PC-3 (cell line): ENCODE measurements at regions of chr10 and their contacts with region 1.

Region 1: GRCh38 chr10:29857843-29858701 is 201.3 kb downstream of the JCAD start:
- DNase-seq: peak; percentile 81
- ATAC-seq: peak; percentile 57
- H3K4me3 ChIP-seq: peak overlapping the region; percentile 28; the same call in 1 of the 2 replicates
- H3K27ac ChIP-seq: peak overlapping the region; percentile 63
- H3K4me1 ChIP-seq: peaks cover 41% of the 10 kb centered on the region
- H3K27me3 ChIP-seq: no peaks in the 10 kb centered on the region
- CTCF ChIP-seq: peak; percentile 82

Region 2: GRCh38 chr10:29535012-29535777 is 322.9 kb before region 1 on chr10:
- CTCF ChIA-PET with region 1: no interaction called
- POLR2A ChIA-PET with region 1: no interaction called
- intact Hi-C with region 1: loop called (anchors 10 kb)
- DNase-seq: peak; percentile 90
- ATAC-seq: peak; percentile 89
- H3K4me3 ChIP-seq: peak overlapping the region; percentile 43; the same call in 1 of the 2 replicates
- H3K27ac ChIP-seq: peak overlapping the region; percentile 96
- H3K4me1 ChIP-seq: peaks cover 43% of the 10 kb centered on the region
- H3K27me3 ChIP-seq: no peaks in the 10 kb centered on the region
- CTCF ChIP-seq: peak; percentile 90

Region 3: GRCh38 chr10:29658984-29659965 is 198.8 kb before region 1 on chr10:
- CTCF ChIA-PET with region 1: no interaction called
- POLR2A ChIA-PET with region 1: no interaction called
- intact Hi-C with region 1: loop called (anchors 1 kb)
- DNase-seq: peak; percentile 95
- ATAC-seq: peak; percentile 94
- H3K4me3 ChIP-seq: peak overlapping the region; percentile 30
- H3K27ac ChIP-seq: peak overlapping the region; percentile 94
- H3K4me1 ChIP-seq: peaks cover 42% of the 10 kb centered on the region
- H3K27me3 ChIP-seq: no peaks in the 10 kb centered on the region
- CTCF ChIP-seq: no peak

Region 4: DNA sequence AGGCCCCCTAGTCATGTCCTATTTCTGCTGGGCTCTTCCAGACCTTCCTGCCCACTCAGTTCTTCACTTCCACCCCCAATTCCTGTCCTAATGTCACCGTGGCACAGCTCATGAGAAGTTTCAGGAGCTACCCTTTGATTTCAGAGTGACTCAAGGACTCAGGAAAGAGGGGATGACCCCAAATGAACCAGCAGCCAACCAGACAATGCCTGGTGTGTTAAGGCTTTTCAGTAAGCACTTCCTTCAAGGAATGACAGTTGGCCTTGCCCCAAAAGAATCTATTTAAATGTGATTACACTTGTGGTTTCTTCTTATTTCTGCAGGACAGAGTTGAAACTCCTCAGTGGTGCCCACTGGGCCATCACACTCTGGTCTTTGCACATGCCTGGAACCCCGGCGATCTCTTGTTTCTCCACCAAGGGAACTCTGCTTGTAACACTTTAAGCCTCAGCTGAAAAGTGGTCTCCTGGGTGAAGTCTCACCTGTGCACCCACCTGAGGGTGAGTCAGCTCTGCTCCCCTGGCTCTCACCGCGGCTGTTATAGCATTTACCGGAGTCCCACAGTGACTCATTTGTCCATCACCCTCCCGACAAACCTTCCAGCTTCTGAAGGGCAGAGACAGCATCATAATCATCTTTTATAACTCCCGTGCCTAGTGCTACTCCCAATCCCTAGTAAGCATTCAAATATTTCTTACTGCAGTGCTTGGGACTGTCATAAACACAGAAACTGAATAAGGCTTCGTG is 100.3 kb before region 1 on chr10:
- CTCF ChIA-PET with region 1: no interaction called
- POLR2A ChIA-PET with region 1: no interaction called
- intact Hi-C with region 1: loop called (anchors 5 kb)
- DNase-seq: peak; percentile 91
- ATAC-seq: peak; percentile 92
- H3K4me3 ChIP-seq: peak overlapping the region; percentile 49; the same call in 1 of the 2 replicates
- H3K27ac ChIP-seq: peak overlapping the region; percentile 98
- H3K4me1 ChIP-seq: peaks cover 36% of the 10 kb centered on the region
- H3K27me3 ChIP-seq: no peaks in the 10 kb centered on the region
- CTCF ChIP-seq: no peak

Region 5: GRCh38 chr10:29804025-29804852 is 53.8 kb before region 1 on chr10:
- CTCF ChIA-PET with region 1: no interaction called
- POLR2A ChIA-PET with region 1: interaction called, 3 read pairs
- intact Hi-C with region 1: loop called (anchors 5 kb)
- DNase-seq: peak; percentile 97
- ATAC-seq: peak; percentile 79
- H3K4me3 ChIP-seq: peak overlapping the region; percentile 49; the same call in 1 of the 2 replicates
- H3K27ac ChIP-seq: peak overlapping the region; percentile 100
- H3K4me1 ChIP-seq: peaks cover 50% of the 10 kb centered on the region
- H3K27me3 ChIP-seq: no peaks in the 10 kb centered on the region
- CTCF ChIP-seq: no peak

Region 6: GRCh38 chr10:29900865-29901264 is 42.8 kb after region 1 on chr10:
- CTCF ChIA-PET with region 1: no interaction called
- POLR2A ChIA-PET with region 1: no interaction called
- intact Hi-C with region 1: no loop called
- DNase-seq: no peak
- ATAC-seq: no peak
- H3K4me3 ChIP-seq: no peak overlapping the region
- H3K27ac ChIP-seq: no peak overlapping the region
- H3K4me1 ChIP-seq: no peaks in the 10 kb centered on the region
- H3K27me3 ChIP-seq: no peaks in the 10 kb centered on the region; the same call in 1 of the 2 replicates
- CTCF ChIP-seq: no peak

Region 7: GRCh38 chr10:29957907-29958356 is 99.9 kb after region 1 on chr10:
- CTCF ChIA-PET with region 1: no interaction called
- POLR2A ChIA-PET with region 1: no interaction called
- intact Hi-C with region 1: no loop called
- DNase-seq: no peak
- ATAC-seq: no peak
- H3K4me3 ChIP-seq: no peak overlapping the region
- H3K27ac ChIP-seq: no peak overlapping the region
- H3K4me1 ChIP-seq: peaks cover 6% of the 10 kb centered on the region; the same call in 1 of the 2 replicates
- H3K27me3 ChIP-seq: no peaks in the 10 kb centered on the region
- CTCF ChIP-seq: no peak